H1 (cell line): ENCODE measurements at regions of chr14 and their contacts with region 1.

Region 1: GRCh38 chr14:77339407-77339806 is 18.6 kb downstream of the GSTZ1 start:
- DNase-seq: no peak
- H3K4me3 ChIP-seq: no peak overlapping the region
- H3K27ac ChIP-seq: no peak overlapping the region
- H3K4me1 ChIP-seq: peaks cover 5 to 19% (median 10%) of the 10 kb centered on the region in 4 experiments
- H3K27me3 ChIP-seq: no peaks in the 10 kb centered on the region
- CTCF ChIP-seq: no peak
- EP300 ChIP-seq: no peak
- POLR2A ChIP-seq: no peak
- RAD21 ChIP-seq: no peak

Region 2: GRCh38 chr14:77320238-77320935 is 19.0 kb before region 1 on chr14 and contains the start of gene POMT2:
- CTCF ChIA-PET with region 1: interaction called, 15 read pairs
- POLR2A ChIA-PET with region 1: interaction called, 12 read pairs
- DNase-seq: peak; percentile 84 to 98
- H3K4me3 ChIP-seq: peak within 1 kb of the TSS; percentile 63 to 93 (median 91)
- H3K27ac ChIP-seq: peak within 1 kb of the TSS; percentile 94
- H3K4me1 ChIP-seq: peaks cover 4 to 18% (median 9%) of the 10 kb centered on the region in 4 experiments; a peak in 6 of 7 replicates
- H3K27me3 ChIP-seq: no peaks in the 10 kb centered on the region
- CTCF ChIP-seq: peak; percentile 26 to 48 (median 35); a peak in 3 of 4 replicates
- EP300 ChIP-seq: no peak
- POLR2A ChIP-seq: peak in 1 of 2 experiments; percentile 57; a peak in 2 of 3 replicates
- RAD21 ChIP-seq: 0 out of 4 replicates have a peak, but pooled peaks of 1 of the 2 experiments have one; percentile 3
- total RNA-seq, gene POMT2: 41.2 and 44.9 TPM in 2 replicates

Region 3: DNA sequence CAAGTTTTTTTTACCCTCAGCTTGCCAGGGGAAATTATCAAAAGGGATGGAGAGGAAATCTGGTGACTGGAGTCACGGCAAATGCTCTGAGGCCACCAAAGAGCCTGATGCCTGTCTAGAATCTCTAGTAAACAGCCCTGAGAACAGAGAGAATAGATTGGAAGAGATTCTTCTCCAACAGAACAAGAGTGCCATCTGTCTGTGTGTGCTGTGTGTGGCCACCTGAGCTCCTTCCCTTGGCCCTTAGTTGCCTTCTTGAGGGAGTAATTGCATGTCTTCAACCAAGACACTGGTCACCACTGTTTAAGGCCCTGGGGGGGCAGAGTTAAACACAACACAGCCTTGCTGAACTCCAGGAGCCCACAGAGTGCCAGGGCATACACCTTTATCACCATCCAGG is 13.2 kb before region 1 on chr14:
- CTCF ChIA-PET with region 1: interaction called, 12 read pairs
- POLR2A ChIA-PET with region 1: interaction called, 12 read pairs
- DNase-seq: no peak
- H3K4me3 ChIP-seq: no peak overlapping the region
- H3K27ac ChIP-seq: no peak overlapping the region
- H3K4me1 ChIP-seq: peaks cover 4 to 11% (median 7%) of the 10 kb centered on the region in 4 experiments; a peak in 6 of 7 replicates
- H3K27me3 ChIP-seq: no peaks in the 10 kb centered on the region
- CTCF ChIP-seq: no peak
- EP300 ChIP-seq: no peak
- POLR2A ChIP-seq: no peak
- RAD21 ChIP-seq: peak in 1 of 2 experiments; percentile 21; a peak in 1 of 4 replicates